IMR-90 (cell line): ENCODE measurements at regions of chr17 and their contacts with region 1.

Region 1: DNA sequence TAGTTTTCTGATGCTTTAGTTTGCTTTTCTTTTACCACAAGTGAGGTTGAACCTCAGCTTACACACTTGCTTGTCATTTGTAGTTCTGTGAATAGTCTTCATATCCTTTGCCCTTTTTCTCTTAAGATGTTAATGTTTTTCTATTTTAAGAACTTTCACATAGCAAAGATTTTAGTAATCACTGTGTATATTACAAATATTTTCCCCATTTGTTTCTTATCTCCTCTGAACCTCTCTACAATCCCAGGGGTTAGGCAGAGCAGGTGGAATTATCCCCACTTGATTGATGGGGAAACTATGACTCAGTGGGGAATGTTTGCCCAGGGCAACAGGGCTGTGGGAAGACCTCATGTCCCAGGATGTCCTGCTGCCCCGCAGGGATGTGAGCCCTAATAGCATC is 11.7 kb upstream of the MYH3 start:
- DNase-seq: peak; percentile 83
- ATAC-seq: peak; percentile 85
- H3K4me3 ChIP-seq: no peak overlapping the region
- H3K27ac ChIP-seq: no peak overlapping the region
- H3K4me1 ChIP-seq: peaks cover 6% of the 10 kb centered on the region
- H3K27me3 ChIP-seq: no peaks in the 10 kb centered on the region
- CTCF ChIP-seq: no peak
- POLR2A ChIP-seq: no peak
- RAD21 ChIP-seq: no peak

Region 2: GRCh38 chr17:10683853-10684252 is 15.1 kb after region 1 on chr17:
- CTCF ChIA-PET with region 1: interaction called, 3 read pairs
- POLR2A ChIA-PET with region 1: interaction called, 17 read pairs
- dilution Hi-C with region 1: no loop called
- in situ Hi-C with region 1: no loop called
- intact Hi-C with region 1: no loop called
- DNase-seq: peak; percentile 39
- ATAC-seq: no peak
- H3K4me3 ChIP-seq: no peak overlapping the region
- H3K27ac ChIP-seq: no peak overlapping the region
- H3K4me1 ChIP-seq: peaks cover 2% of the 10 kb centered on the region; the same call in 1 of the 2 replicates
- H3K27me3 ChIP-seq: no peaks in the 10 kb centered on the region
- CTCF ChIP-seq: peak; percentile 52
- POLR2A ChIP-seq: no peak
- RAD21 ChIP-seq: peak; percentile 34

Region 3: GRCh38 chr17:10729334-10730193 is 60.8 kb after region 1 on chr17 and contains the start of gene TMEM220:
- CTCF ChIA-PET with region 1: no interaction called
- POLR2A ChIA-PET with region 1: no interaction called
- dilution Hi-C with region 1: no loop called
- in situ Hi-C with region 1: loop called (anchors 10 kb)
- intact Hi-C with region 1: no loop called
- DNase-seq: peak; percentile 59
- ATAC-seq: peak; percentile 96
- H3K4me3 ChIP-seq: peak within 1 kb of the TSS; percentile 81
- H3K27ac ChIP-seq: peak within 1 kb of the TSS; percentile 81
- H3K4me1 ChIP-seq: no peaks in the 10 kb centered on the region; the same call in 1 of the 2 replicates
- H3K27me3 ChIP-seq: no peaks in the 10 kb centered on the region; the same call in 1 of the 2 replicates
- CTCF ChIP-seq: no peak
- POLR2A ChIP-seq: peak; percentile 43; the same call in 1 of the 2 replicates
- RAD21 ChIP-seq: no peak
- total RNA-seq, gene TMEM220: 1.1 and 1.7 TPM in 2 replicates